CD8-positive, alpha-beta memory T cell (primary cell): ENCODE measurements at regions of chr3 and their contacts with region 1.

Region 1: DNA sequence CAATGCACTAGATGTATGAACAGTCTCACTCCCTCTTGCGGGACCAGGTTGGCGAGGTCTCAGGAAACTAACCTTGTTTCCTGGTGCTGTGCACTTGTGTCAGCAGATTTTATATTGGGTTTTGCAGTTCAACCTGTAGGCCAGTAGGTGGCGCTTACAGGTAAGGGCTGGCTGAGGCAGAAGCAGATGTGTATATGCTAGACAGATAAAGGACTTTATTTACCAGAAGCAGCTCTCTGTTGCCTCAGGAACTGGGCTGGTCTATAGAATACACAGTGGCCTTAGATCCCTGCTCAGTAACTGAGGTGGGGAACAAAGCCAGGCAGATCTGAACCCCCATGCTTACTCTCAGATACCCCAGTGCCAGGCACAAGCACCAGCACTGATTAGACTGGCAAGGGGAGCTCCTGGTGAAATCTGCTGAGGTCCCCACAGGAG is 296.8 kb downstream of the DOCK3 start:
- DNase-seq: peak; percentile 28 to 74 (median 72)
- H3K4me3 ChIP-seq: no peak overlapping the region
- H3K4me3 Mint-ChIP-seq: peak overlapping the region in 3 of 7 donors; percentile 16 to 56 (median 28)
- H3K27ac ChIP-seq: no peak overlapping the region
- H3K27ac Mint-ChIP-seq: peak overlapping the region in 5 of 8 donors; percentile 40 to 79 (median 77)
- H3K4me1 ChIP-seq: peaks cover 14% of the 10 kb centered on the region
- H3K4me1 Mint-ChIP-seq: peaks cover 21 to 24% (median 24%) of the 10 kb centered on the region in 3 donors
- H3K27me3 ChIP-seq: no peaks in the 10 kb centered on the region
- H3K27me3 Mint-ChIP-seq: no peaks in the 10 kb centered on the region

Region 2: DNA sequence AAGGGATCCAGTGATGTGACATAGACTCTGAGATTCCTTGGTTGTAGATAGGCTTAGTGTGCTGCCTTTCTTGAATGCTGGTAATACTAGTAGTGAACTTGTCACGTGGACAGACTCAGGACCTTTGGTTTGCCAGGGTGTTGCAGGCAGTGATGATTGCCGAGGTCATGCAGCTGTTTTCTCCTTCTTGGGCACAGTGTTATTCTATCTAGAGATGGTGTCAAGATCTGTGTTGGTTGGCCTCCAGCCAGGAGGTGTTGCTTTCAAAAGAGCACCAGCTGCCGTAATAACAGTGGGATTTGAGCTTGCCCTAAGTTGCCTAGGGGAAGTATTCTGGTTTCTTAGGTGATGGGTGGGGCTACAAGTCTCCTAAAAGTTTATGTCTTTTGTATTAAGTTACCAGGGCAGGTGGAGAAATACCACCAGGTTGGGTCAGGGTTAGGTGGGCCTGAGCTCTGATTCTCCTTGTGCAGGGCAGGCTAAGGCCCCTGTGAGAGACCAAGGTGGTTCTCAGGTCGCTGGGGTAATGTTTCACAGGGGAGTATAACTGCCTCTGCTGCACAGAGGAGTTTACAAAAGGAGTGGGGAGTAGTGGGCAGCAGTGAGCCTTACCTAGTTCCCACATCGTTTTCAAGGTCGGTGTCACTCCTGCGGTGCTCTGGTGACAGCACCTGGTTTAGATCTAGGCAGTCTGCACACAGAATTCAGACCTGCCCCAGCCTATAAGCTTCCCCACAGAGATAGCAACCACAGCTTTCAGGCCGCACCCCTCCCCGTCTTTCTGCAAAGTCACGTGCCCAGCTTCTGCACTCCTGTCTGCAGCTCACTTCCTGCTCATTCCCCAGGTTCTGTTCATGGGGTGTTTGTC is 53.5 kb after region 1 on chr3:
- CTCF ChIA-PET with region 1: interaction called, 20 read pairs
- POLR2A ChIA-PET with region 1: interaction called, 4 read pairs
- DNase-seq: peak; percentile 68 to 92 (median 84)
- H3K4me3 ChIP-seq: peak overlapping the region; percentile 44
- H3K4me3 Mint-ChIP-seq: peak overlapping the region; percentile 74 to 87 (median 84)
- H3K27ac ChIP-seq: peak overlapping the region; percentile 78
- H3K27ac Mint-ChIP-seq: peak overlapping the region; percentile 95 to 100 (median 98)
- H3K4me1 ChIP-seq: peaks cover 48% of the 10 kb centered on the region
- H3K4me1 Mint-ChIP-seq: peaks cover 62 to 70% (median 62%) of the 10 kb centered on the region in 3 donors
- H3K27me3 ChIP-seq: no peaks in the 10 kb centered on the region
- H3K27me3 Mint-ChIP-seq: no peaks in the 10 kb centered on the region

Region 3: GRCh38 chr3:51163051-51163450 is 191.5 kb after region 1 on chr3:
- CTCF ChIA-PET with region 1: no interaction called
- POLR2A ChIA-PET with region 1: no interaction called
- DNase-seq: no peak
- H3K4me3 ChIP-seq: no peak overlapping the region
- H3K4me3 Mint-ChIP-seq: no peak overlapping the region
- H3K27ac ChIP-seq: no peak overlapping the region
- H3K27ac Mint-ChIP-seq: peak overlapping the region in 1 of 8 donors; percentile 19
- H3K4me1 ChIP-seq: no peaks in the 10 kb centered on the region
- H3K4me1 Mint-ChIP-seq: no peaks in the 10 kb centered on the region
- H3K27me3 ChIP-seq: no peaks in the 10 kb centered on the region
- H3K27me3 Mint-ChIP-seq: peaks cover 0 to 2% of the 10 kb centered on the region in 2 donors

Region 4: DNA sequence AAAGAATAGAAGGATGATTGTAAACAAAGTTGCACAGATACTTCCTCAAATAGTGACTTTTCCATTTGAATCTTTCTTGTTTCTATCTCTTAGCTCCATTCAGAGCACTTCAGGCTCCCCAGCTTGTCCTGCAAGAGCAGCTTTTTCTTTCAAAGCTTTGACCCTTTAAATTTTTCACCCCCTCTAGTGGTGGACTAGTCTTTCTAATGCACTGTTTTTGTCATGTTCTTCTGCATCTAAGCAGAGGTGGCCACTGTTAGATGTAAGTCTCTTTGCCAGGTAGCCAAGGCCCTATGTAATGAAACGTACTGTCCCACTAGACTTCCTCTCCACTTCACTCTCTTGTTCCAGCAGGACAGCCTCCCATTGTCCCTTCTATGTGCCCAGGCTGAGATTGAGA is 339.5 kb after region 1 on chr3:
- CTCF ChIA-PET with region 1: interaction called, 31 read pairs
- POLR2A ChIA-PET with region 1: no interaction called
- DNase-seq: peak in 2 of 5 donors; percentile 23 to 27
- H3K4me3 ChIP-seq: no peak overlapping the region
- H3K4me3 Mint-ChIP-seq: no peak overlapping the region
- H3K27ac ChIP-seq: no peak overlapping the region
- H3K27ac Mint-ChIP-seq: peak overlapping the region in 4 of 8 donors; percentile 0 to 23 (median 10)
- H3K4me1 ChIP-seq: no peaks in the 10 kb centered on the region
- H3K4me1 Mint-ChIP-seq: no peaks in the 10 kb centered on the region
- H3K27me3 ChIP-seq: no peaks in the 10 kb centered on the region
- H3K27me3 Mint-ChIP-seq: peaks cover 5 to 6% of the 10 kb centered on the region in 2 donors

Region 5: DNA sequence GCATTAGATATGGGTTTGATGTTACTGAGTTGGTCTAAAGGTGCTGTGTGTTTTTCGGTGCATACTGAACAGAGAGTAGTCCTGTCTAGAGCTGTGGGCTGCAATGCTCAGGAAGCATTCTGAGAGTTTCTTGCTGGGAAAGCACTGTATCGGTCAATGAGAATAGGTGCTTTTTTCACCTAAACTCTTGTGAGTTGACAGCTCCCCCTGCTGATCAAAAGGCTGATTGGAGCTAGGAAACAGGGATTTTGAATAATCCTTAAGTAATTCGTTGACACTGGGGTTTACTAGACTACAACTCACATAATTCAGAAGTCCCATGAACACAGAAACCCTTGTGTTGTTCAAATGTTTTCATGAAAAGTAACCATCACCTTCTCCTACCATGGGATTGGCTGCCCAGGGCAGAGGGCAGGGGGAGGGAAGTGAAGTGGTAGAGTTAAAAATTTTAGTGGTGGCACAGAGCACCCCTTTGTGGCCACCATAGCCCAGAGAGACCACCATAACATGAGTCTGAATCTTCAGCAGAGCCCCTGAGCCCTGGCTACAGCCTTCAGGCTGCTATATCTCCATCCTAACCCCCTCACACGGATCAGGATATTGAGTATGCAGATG is 400.5 kb after region 1 on chr3:
- CTCF ChIA-PET with region 1: interaction called, 16 read pairs
- POLR2A ChIA-PET with region 1: no interaction called
- DNase-seq: peak in 4 of 5 donors; percentile 13 to 57 (median 37)
- H3K4me3 ChIP-seq: no peak overlapping the region
- H3K4me3 Mint-ChIP-seq: no peak overlapping the region
- H3K27ac ChIP-seq: no peak overlapping the region
- H3K27ac Mint-ChIP-seq: no peak overlapping the region
- H3K4me1 ChIP-seq: peaks cover 3% of the 10 kb centered on the region
- H3K4me1 Mint-ChIP-seq: peaks cover 0 to 4% (median 2%) of the 10 kb centered on the region in 3 donors
- H3K27me3 ChIP-seq: no peaks in the 10 kb centered on the region
- H3K27me3 Mint-ChIP-seq: peaks cover 8 to 23% of the 10 kb centered on the region in 2 donors

Region 6: DNA sequence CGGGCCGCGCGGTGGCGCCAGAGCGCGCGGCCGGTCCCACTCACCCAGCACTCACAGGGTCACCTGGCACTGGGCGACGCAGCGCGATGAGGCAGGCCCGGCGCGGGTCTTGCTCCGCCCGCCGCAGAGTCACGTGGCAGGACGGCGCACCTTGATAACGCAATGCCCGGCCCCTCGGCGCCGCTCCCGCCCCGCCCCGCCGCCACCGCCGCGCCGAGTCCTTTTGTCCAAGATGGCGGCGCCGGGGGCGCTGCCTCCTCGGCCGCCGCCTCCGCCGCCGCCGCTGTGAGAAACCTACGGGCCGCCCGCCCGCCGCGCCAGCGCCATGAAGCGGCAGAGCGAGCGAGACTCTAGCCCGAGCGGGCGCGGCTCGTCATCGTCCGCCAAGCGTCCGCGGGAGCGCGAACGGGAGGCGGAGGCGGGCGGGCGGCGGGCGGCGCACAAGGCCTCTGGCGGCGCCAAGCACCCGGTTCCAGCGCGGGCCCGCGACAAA is 419.6 kb after region 1 on chr3 and contains the start of gene RBM15B:
- CTCF ChIA-PET with region 1: interaction called, 14 read pairs
- POLR2A ChIA-PET with region 1: no interaction called
- DNase-seq: peak; percentile 96 to 98 (median 97)
- H3K4me3 ChIP-seq: peak within 1 kb of the TSS; percentile 56
- H3K4me3 Mint-ChIP-seq: peak within 1 kb of the TSS; percentile 79 to 93 (median 83)
- H3K27ac ChIP-seq: peak within 1 kb of the TSS; percentile 61
- H3K27ac Mint-ChIP-seq: peak within 1 kb of the TSS; percentile 88 to 96 (median 92)
- H3K4me1 ChIP-seq: peaks cover 71% of the 10 kb centered on the region
- H3K4me1 Mint-ChIP-seq: peaks cover 54 to 81% (median 66%) of the 10 kb centered on the region in 3 donors
- H3K27me3 ChIP-seq: no peaks in the 10 kb centered on the region
- H3K27me3 Mint-ChIP-seq: no peaks in the 10 kb centered on the region
- total RNA-seq, gene RBM15B: 47.4 to 47.8 TPM

Region 7: GRCh38 chr3:51445544-51446280 is 474.2 kb after region 1 on chr3:
- CTCF ChIA-PET with region 1: no interaction called
- POLR2A ChIA-PET with region 1: no interaction called
- DNase-seq: no peak
- H3K4me3 ChIP-seq: no peak overlapping the region
- H3K4me3 Mint-ChIP-seq: no peak overlapping the region
- H3K27ac ChIP-seq: no peak overlapping the region
- H3K27ac Mint-ChIP-seq: peak overlapping the region in 3 of 8 donors; percentile 41 to 68 (median 59)
- H3K4me1 ChIP-seq: peaks cover 9% of the 10 kb centered on the region
- H3K4me1 Mint-ChIP-seq: peaks cover 26 to 48% (median 34%) of the 10 kb centered on the region in 3 donors
- H3K27me3 ChIP-seq: no peaks in the 10 kb centered on the region
- H3K27me3 Mint-ChIP-seq: no peaks in the 10 kb centered on the region